Activated naive CD8-positive, alpha-beta T cell treated with anti-CD3 and anti-CD28 coated beads, Interleukin-2, amount 10 ng/mL, durations not matched to agents 7 days and 5 days (primary cell): ENCODE measurements at regions of chr12 and their contacts with region 1.

Region 1: DNA sequence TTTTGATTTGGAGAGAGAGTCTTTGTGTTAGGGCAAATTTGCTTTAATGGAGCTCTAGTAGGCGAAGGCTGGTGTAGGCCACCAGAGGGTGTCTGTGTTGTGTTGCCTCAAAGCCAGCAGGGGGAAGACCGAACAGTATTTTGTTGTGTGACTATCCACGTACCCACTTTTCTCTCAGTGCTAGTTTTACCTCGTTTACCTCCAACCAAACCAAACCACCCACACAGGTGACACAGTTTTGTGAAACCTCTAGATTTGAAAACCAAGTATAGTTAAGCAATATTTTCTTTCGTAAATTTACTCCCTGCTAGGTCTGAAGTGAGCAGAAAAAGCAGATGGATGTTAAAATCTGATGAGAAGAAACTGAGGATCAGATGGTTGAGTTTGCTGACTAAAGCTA is 36.3 kb upstream of the NPFF start:
- DNase-seq: no peak
- ATAC-seq: peak; percentile 95
- H3K4me3 Mint-ChIP-seq: peak overlapping the region; percentile 7
- H3K27ac Mint-ChIP-seq: peak overlapping the region; percentile 62
- H3K4me1 Mint-ChIP-seq: peaks cover 9% of the 10 kb centered on the region
- H3K27me3 Mint-ChIP-seq: no peaks in the 10 kb centered on the region

Region 2: DNA sequence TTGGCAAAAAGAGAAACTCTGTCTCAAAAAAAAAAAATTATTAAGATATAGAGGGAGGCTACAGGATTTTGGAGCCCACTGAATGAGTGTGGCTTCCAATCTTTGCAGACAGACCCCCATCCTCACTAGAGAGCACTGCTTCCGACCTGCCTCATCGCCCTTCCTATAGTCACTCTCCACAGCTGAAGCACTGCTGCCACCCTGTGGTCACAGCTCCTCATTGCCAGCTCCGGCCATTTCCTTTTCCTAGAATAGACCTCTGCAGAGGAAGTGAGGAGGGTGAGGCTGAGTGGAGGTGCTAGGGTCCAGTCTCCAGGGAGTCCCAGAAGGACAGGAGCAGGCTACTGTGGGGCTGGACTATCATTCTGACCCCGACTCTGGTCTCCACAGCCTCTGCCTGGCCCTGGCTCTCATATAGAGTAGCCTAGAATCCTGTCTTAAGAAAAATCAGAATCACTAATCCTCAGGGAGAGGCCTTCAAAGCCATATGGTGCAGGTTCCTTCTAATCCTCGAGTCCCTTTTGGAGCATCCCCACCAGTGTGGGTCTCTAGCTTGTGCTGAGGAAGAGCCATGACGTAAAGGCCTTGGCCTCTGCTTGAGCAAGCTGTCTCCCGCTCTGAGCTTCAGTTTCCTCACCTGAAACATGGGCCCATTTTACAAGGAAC is 34.9 kb before region 1 on chr12:
- POLR2A ChIA-PET with region 1: no interaction called
- DNase-seq: peak; percentile 86
- ATAC-seq: peak; percentile 93
- H3K4me3 Mint-ChIP-seq: peak overlapping the region; percentile 34
- H3K27ac Mint-ChIP-seq: peak overlapping the region; percentile 85
- H3K4me1 Mint-ChIP-seq: peaks cover 12% of the 10 kb centered on the region
- H3K27me3 Mint-ChIP-seq: no peaks in the 10 kb centered on the region

Region 3: GRCh38 chr12:53530061-53530460 is 13.5 kb before region 1 on chr12:
- POLR2A ChIA-PET with region 1: no interaction called
- DNase-seq: no peak
- ATAC-seq: no peak
- H3K4me3 Mint-ChIP-seq: no peak overlapping the region
- H3K27ac Mint-ChIP-seq: no peak overlapping the region
- H3K4me1 Mint-ChIP-seq: no peaks in the 10 kb centered on the region
- H3K27me3 Mint-ChIP-seq: no peaks in the 10 kb centered on the region

Region 4: DNA sequence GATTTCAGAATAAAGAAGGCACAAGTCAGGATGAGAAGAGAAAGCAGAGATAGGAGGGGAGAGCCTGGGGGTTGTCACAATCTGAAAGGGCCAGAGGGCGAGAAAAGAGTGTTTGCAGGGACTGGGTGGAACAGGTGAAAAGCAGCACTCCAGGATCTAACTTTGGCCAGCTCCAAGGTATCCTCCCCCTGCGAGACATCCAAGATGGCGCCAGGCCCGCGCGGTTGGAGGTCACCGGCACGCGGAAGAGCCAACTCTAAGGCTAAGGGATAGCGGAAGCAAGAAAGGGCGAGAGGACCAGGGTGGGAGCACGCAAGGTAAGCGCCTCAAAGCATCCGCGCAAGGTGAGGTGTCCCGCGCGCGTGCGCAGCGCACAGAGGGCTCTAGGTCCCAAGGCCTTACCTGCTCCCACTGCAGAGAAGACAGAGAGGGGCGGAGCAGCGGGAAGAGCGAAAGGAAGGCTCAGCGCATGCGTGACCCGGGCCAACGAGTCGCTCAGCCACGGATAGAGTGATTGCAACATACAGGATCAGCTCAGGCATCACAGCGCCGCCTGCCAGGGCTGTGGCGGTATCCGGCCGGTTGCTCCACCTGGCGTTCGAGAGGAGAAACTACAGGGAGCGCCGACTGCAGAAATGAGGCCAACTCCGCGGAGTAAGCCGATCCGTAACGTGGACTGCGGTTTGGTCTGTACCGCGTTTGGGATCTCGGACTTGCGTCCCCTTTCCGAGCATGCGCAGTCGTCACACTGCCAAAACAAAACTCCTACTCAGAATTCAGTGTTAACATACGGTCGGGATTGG is 132.3 kb after region 1 on chr12 and contains the start of gene ATP5MC2:
- POLR2A ChIA-PET with region 1: interaction called, 12 read pairs
- DNase-seq: peak; percentile 96
- ATAC-seq: peak; percentile 97
- H3K4me3 Mint-ChIP-seq: peak within 1 kb of the TSS; percentile 90
- H3K27ac Mint-ChIP-seq: peak within 1 kb of the TSS; percentile 93
- H3K4me1 Mint-ChIP-seq: peaks cover 22% of the 10 kb centered on the region
- H3K27me3 Mint-ChIP-seq: peaks cover 28% of the 10 kb centered on the region
- total RNA-seq, gene ATP5MC2: 226 to 241 TPM